ENCODE measurements at regions of chr7 and their contacts with region 1.

Region 1: DNA sequence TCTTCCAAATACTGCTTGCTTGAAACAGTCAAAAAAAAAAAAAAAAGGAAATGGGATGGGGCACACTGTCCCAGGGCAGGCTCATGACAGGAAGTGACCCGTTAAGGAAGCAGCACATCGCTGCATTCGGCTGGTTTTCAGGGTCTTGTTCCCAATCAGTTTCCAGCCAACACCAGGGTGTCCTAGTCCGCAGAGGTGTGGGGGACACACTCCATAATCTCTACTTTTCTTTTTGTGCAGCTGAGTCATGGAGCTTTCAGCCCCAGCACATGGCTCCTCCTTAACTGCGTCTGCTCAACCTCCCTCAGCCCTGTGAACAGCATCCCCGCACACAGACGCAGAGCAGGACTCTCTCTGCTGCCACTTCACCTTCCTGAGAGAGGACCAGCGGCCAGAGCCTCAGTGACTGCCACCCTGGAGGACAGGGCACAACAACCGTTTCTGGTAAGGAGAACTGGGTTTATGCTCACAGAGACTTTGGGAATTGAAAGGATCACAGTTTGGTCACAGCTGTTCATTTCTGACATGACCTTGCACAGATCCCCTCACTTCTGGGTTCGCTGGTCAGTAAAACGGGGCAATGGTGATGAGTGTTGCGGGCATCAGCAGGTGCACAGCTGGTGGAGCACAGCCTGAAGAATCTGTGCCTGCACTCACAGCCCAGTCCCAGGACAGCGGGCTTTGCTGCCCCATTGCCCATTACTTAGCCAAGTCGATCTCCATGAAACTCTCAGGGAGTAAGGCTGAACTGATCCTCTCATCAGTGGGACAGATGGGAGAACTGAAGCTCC is at the start of gene GIMAP5:
- DNase-seq: peak in 7 of 9 experiments; percentile 57 to 82 (median 61)
- ATAC-seq: peak; percentile 71
- H3K4me3 ChIP-seq: peak within 1 kb of the TSS; percentile 76 to 83
- H3K4me3 Mint-ChIP-seq: peak within 1 kb of the TSS; percentile 95
- H3K27ac ChIP-seq: peak within 1 kb of the TSS; percentile 66 to 81
- H3K27ac Mint-ChIP-seq: peak within 1 kb of the TSS; percentile 97
- H3K4me1 ChIP-seq: peaks cover 66% of the 10 kb centered on the region
- H3K4me1 Mint-ChIP-seq: peaks cover 74% of the 10 kb centered on the region
- H3K27me3 ChIP-seq: no peaks in the 10 kb centered on the region
- H3K27me3 Mint-ChIP-seq: no peaks in the 10 kb centered on the region
- CTCF ChIP-seq: no peak
- total RNA-seq, gene GIMAP5: 23.5 to 24.1 TPM

Region 2: DNA sequence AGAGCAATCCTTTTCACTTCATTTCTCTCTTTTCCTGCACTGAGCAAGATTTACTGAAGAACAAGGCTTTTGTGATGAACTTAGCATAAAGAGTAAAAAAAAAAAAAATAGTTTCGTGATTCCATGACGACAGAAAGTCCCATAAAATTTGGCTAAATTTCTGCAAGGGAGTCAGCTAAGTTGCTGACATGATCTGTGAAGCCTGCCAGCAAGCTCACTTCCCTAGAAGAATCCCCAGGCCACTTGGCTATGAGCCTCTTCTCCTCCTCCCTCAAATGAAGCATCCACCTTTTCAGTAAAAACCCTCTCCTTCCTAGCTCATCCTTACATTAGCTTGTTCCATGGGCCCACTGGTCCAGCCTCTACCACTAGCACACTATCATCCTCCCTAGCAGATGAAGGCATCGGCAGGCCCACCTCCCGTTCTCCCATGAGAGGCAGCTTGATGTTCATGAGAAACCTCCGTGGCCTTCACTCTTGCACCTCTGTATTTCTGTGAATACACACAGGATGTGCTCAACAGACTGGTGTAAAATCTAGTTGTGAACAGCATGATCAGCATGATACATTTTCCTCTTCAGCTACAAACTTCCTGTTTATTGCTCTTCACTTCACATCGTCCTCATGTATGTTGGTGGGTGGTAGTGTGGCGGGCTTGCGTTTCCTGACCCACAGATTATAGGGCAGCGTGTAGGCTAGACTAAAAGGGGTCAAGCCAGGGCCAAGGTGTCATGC is 256.1 kb before region 1 on chr7:
- CTCF ChIA-PET with region 1: no interaction called
- POLR2A ChIA-PET with region 1: interaction called, 12 read pairs
- intact Hi-C with region 1: no loop called
- DNase-seq: peak; percentile 27 to 84 (median 65)
- ATAC-seq: peak; percentile 63
- H3K4me3 ChIP-seq: peak overlapping the region; percentile 1 to 14
- H3K4me3 Mint-ChIP-seq: peak overlapping the region; percentile 81
- H3K27ac ChIP-seq: peak overlapping the region; percentile 55 to 91
- H3K27ac Mint-ChIP-seq: peak overlapping the region; percentile 100
- H3K4me1 ChIP-seq: peaks cover 89% of the 10 kb centered on the region
- H3K4me1 Mint-ChIP-seq: peaks cover 91% of the 10 kb centered on the region
- H3K27me3 ChIP-seq: no peaks in the 10 kb centered on the region
- H3K27me3 Mint-ChIP-seq: no peaks in the 10 kb centered on the region
- CTCF ChIP-seq: no peak

Region 3: DNA sequence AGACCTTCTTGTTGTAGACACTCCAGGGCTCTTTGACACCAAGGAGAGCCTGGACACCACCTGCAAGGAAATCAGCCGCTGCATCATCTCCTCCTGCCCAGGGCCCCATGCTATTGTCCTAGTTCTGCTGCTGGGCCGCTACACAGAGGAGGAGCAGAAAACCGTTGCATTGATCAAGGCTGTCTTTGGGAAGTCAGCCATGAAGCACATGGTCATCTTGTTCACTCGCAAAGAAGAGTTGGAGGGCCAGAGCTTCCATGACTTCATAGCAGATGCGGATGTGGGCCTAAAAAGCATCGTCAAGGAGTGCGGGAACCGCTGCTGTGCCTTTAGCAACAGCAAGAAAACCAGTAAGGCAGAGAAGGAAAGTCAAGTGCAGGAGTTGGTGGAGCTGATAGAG is 217.3 kb before region 1 on chr7:
- CTCF ChIA-PET with region 1: interaction called, 7 read pairs
- POLR2A ChIA-PET with region 1: interaction called, 30 read pairs
- intact Hi-C with region 1: loop called in 1 of 2 experiments (anchors 5 kb)
- DNase-seq: peak in 6 of 9 experiments; percentile 9 to 75 (median 33)
- ATAC-seq: peak; percentile 27
- H3K4me3 ChIP-seq: peak overlapping the region; percentile 58 to 76
- H3K4me3 Mint-ChIP-seq: peak overlapping the region; percentile 100
- H3K27ac ChIP-seq: peak overlapping the region; percentile 58 to 75
- H3K27ac Mint-ChIP-seq: peak overlapping the region; percentile 91
- H3K4me1 ChIP-seq: peaks cover 12% of the 10 kb centered on the region
- H3K4me1 Mint-ChIP-seq: peaks cover 44% of the 10 kb centered on the region
- H3K27me3 ChIP-seq: no peaks in the 10 kb centered on the region
- H3K27me3 Mint-ChIP-seq: no peaks in the 10 kb centered on the region
- CTCF ChIP-seq: no peak

Region 4: DNA sequence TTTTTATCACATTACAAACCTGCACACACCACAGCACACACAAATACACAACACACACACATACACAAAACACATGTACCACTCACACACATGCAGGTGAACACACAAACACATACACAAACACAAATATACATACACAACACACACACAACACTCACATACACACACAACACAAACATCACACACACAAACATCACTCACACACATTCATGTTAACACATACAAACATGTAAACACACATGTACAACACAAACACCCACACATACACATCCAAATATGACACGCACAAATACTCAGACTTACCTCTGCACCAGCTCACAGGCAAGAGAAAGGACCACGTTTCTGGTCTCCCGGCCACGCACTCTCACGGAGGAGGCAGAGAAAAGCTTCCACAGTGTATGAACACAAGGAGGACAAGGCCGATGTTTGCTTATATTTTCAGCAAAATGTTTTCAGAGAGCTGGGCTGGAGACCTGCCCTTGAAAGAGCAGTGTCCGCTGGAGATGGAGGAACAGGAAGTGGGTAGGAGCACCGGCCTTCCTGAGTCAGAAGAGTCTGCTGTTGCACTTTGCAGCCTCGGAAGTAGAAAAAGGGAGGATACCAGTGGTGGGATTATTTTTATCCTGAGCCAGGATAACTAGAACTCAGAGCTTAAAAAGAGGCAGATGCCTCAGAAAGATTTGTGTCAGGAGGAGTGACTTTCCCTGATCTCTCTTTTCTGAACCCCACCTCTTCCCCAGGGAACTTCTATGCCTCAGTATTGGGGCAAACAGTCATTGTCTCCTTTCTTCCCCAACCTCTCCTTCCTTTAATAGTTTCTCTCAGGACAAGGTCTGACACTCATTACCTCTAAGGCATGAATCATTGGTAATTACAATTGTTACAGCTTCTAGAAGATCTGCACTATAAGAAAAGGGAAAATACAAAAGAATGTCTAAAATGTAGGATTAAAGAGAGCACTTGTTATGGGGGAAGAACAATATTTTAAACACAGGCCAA is 105.3 kb before region 1 on chr7 and contains the start of gene GIMAP6:
- CTCF ChIA-PET with region 1: interaction called, 10 read pairs
- POLR2A ChIA-PET with region 1: interaction called, 15 read pairs
- intact Hi-C with region 1: loop called (anchors 5 kb)
- DNase-seq: peak in 8 of 9 experiments; percentile 33 to 79 (median 50)
- ATAC-seq: peak; percentile 61
- H3K4me3 ChIP-seq: peak within 1 kb of the TSS; percentile 82 to 85
- H3K4me3 Mint-ChIP-seq: peak within 1 kb of the TSS; percentile 97
- H3K27ac ChIP-seq: peak within 1 kb of the TSS; percentile 58 to 83
- H3K27ac Mint-ChIP-seq: peak within 1 kb of the TSS; percentile 96
- H3K4me1 ChIP-seq: peaks cover 54% of the 10 kb centered on the region
- H3K4me1 Mint-ChIP-seq: peaks cover 86% of the 10 kb centered on the region
- H3K27me3 ChIP-seq: no peaks in the 10 kb centered on the region
- H3K27me3 Mint-ChIP-seq: no peaks in the 10 kb centered on the region
- CTCF ChIP-seq: no peak
- total RNA-seq, gene GIMAP6: 10.5 to 10.8 TPM

Region 5: GRCh38 chr7:150685219-150686029 is 52.0 kb before region 1 on chr7 and contains the start of gene GIMAP2:
- CTCF ChIA-PET with region 1: interaction called, 6 read pairs
- POLR2A ChIA-PET with region 1: interaction called, 114 read pairs
- intact Hi-C with region 1: loop called in 1 of 2 experiments (anchors 5 kb)
- DNase-seq: peak in 3 of 9 experiments; percentile 26 to 81 (median 68)
- ATAC-seq: peak; percentile 77
- H3K4me3 ChIP-seq: peak within 1 kb of the TSS; percentile 62 to 69
- H3K4me3 Mint-ChIP-seq: peak within 1 kb of the TSS; percentile 96
- H3K27ac ChIP-seq: peak within 1 kb of the TSS; percentile 66 to 81
- H3K27ac Mint-ChIP-seq: peak within 1 kb of the TSS; percentile 99
- H3K4me1 ChIP-seq: peaks cover 54% of the 10 kb centered on the region
- H3K4me1 Mint-ChIP-seq: peaks cover 82% of the 10 kb centered on the region
- H3K27me3 ChIP-seq: no peaks in the 10 kb centered on the region
- H3K27me3 Mint-ChIP-seq: no peaks in the 10 kb centered on the region
- CTCF ChIP-seq: no peak
- total RNA-seq, gene GIMAP2: 58.4 to 58.8 TPM

Region 6: DNA sequence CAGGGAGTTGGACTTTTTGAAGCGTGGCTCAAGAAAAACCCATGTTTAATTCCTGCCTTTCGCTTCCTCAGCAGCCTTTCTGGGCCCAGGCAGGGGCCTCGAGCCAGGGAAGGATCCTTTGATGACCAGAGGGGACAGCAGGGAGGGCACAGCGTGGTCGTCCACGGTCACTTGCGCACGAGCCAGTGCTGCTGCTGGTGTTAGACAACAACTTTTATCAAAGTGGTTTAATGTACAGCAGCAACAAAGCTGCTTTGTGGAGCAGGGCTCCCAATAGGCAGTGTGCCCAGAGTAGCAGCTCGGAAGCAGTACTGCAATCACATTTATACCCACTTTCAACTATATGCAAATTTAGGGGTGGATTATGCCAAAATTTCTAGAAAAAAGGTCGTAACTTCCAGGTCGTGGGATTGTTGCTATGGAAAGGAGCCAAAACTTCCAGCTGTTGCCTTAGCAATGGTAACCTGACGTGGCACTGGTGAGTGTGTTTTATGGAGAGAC is 15.0 kb before region 1 on chr7:
- CTCF ChIA-PET with region 1: interaction called, 6 read pairs
- POLR2A ChIA-PET with region 1: interaction called, 169 read pairs
- intact Hi-C with region 1: no loop called
- DNase-seq: peak in 1 of 9 experiments; percentile 47
- ATAC-seq: no peak
- H3K4me3 ChIP-seq: peak overlapping the region; percentile 20 to 23
- H3K4me3 Mint-ChIP-seq: peak overlapping the region; percentile 95
- H3K27ac ChIP-seq: peak overlapping the region; percentile 1 to 24
- H3K27ac Mint-ChIP-seq: peak overlapping the region; percentile 96
- H3K4me1 ChIP-seq: peaks cover 57% of the 10 kb centered on the region
- H3K4me1 Mint-ChIP-seq: peaks cover 78% of the 10 kb centered on the region
- H3K27me3 ChIP-seq: no peaks in the 10 kb centered on the region
- H3K27me3 Mint-ChIP-seq: no peaks in the 10 kb centered on the region
- CTCF ChIP-seq: no peak

Region 7: GRCh38 chr7:150753826-150754603 is 16.6 kb after region 1 on chr7:
- CTCF ChIA-PET with region 1: interaction called, 15 read pairs
- POLR2A ChIA-PET with region 1: interaction called, 62 read pairs
- intact Hi-C with region 1: loop called (anchors 1 to 2 kb)
- DNase-seq: peak in 2 of 9 experiments; percentile 57 to 73
- ATAC-seq: peak; percentile 8
- H3K4me3 ChIP-seq: no peak overlapping the region
- H3K4me3 Mint-ChIP-seq: peak overlapping the region; percentile 19
- H3K27ac ChIP-seq: peak overlapping the region in 1 of 2 experiments; percentile 83
- H3K27ac Mint-ChIP-seq: peak overlapping the region; percentile 94
- H3K4me1 ChIP-seq: peaks cover 76% of the 10 kb centered on the region
- H3K4me1 Mint-ChIP-seq: peaks cover 72% of the 10 kb centered on the region
- H3K27me3 ChIP-seq: no peaks in the 10 kb centered on the region
- H3K27me3 Mint-ChIP-seq: no peaks in the 10 kb centered on the region
- CTCF ChIP-seq: no peak

Region 8: DNA sequence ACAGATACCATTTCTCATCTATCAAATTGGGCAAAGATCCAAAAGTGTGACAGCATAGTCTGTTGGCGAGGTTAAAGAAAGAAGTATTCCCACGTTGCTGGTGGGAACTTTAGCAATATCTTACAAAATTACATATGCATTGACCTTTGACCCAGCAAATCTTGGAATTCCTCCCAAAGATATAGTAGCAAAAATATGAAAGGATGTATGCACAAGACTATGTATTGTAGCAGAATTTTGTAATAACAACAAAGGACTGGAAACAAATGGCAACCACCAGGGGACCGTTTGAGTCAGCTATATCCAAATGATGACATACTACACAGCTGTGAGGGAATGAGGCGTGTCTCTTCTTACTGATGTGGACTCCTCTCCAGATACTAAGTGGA is 190.5 kb after region 1 on chr7:
- CTCF ChIA-PET with region 1: no interaction called
- POLR2A ChIA-PET with region 1: no interaction called
- intact Hi-C with region 1: no loop called
- DNase-seq: no peak
- ATAC-seq: no peak
- H3K4me3 ChIP-seq: no peak overlapping the region
- H3K4me3 Mint-ChIP-seq: no peak overlapping the region
- H3K27ac ChIP-seq: no peak overlapping the region
- H3K27ac Mint-ChIP-seq: no peak overlapping the region
- H3K4me1 ChIP-seq: peaks cover 22% of the 10 kb centered on the region
- H3K4me1 Mint-ChIP-seq: peaks cover 20% of the 10 kb centered on the region
- H3K27me3 ChIP-seq: no peaks in the 10 kb centered on the region
- H3K27me3 Mint-ChIP-seq: peaks cover 2% of the 10 kb centered on the region
- CTCF ChIP-seq: no peak

Region 9: GRCh38 chr7:151727579-151728285 is 990.3 kb after region 1 on chr7:
- CTCF ChIA-PET with region 1: no interaction called
- POLR2A ChIA-PET with region 1: no interaction called
- intact Hi-C with region 1: no loop called
- DNase-seq: peak in 5 of 9 experiments; percentile 8 to 52 (median 20)
- ATAC-seq: peak; percentile 14
- H3K4me3 ChIP-seq: no peak overlapping the region
- H3K4me3 Mint-ChIP-seq: no peak overlapping the region
- H3K27ac ChIP-seq: no peak overlapping the region
- H3K27ac Mint-ChIP-seq: no peak overlapping the region
- H3K4me1 ChIP-seq: no peaks in the 10 kb centered on the region
- H3K4me1 Mint-ChIP-seq: no peaks in the 10 kb centered on the region
- H3K27me3 ChIP-seq: no peaks in the 10 kb centered on the region
- H3K27me3 Mint-ChIP-seq: no peaks in the 10 kb centered on the region
- CTCF ChIP-seq: no peak